Activated naive CD4-positive, alpha-beta T cell treated with anti-CD3 and anti-CD28 coated beads for 36 hours (primary cell): ENCODE measurements at regions of chr22 and their contacts with region 1.

Region 1: GRCh38 chr22:24433813-24434470 is 6.5 kb downstream of the ADORA2A start:
- DNase-seq: peak; percentile 84
- H3K4me3 Mint-ChIP-seq: peak overlapping the region; percentile 58
- H3K27ac Mint-ChIP-seq: peak overlapping the region; percentile 99
- H3K4me1 Mint-ChIP-seq: peaks cover 92% of the 10 kb centered on the region
- H3K27me3 Mint-ChIP-seq: no peaks in the 10 kb centered on the region

Region 2: DNA sequence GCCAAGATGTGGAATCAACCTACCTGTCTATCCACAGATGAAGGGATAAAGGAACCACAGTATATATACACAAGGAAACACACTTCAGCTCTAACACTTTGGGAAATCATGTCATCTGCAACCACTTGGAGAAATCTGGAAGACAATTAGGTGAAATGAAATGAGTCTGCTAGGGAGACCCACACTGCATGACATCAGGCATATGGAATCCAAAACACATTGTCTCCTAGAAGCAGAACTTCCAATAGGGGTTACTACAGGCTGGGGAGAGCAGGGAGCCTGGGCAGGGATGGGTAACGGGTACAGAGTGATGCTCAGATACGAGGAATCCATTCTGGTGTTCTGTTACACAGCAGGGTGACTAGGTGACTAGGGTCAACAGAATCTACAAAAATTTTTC is 724.8 kb before region 1 on chr22:
- CTCF ChIA-PET with region 1: no interaction called
- intact Hi-C with region 1: loop called (anchors 5 kb)
- DNase-seq: no peak
- H3K4me3 Mint-ChIP-seq: no peak overlapping the region
- H3K27ac Mint-ChIP-seq: peak overlapping the region; percentile 79
- H3K4me1 Mint-ChIP-seq: peaks cover 63% of the 10 kb centered on the region
- H3K27me3 Mint-ChIP-seq: no peaks in the 10 kb centered on the region

Region 3: GRCh38 chr22:24270638-24271408 is 163.1 kb before region 1 on chr22 and contains the start of gene SPECC1L:
- CTCF ChIA-PET with region 1: no interaction called
- intact Hi-C with region 1: loop called (anchors 2 kb)
- DNase-seq: peak; percentile 91
- H3K4me3 Mint-ChIP-seq: peak within 1 kb of the TSS; percentile 89
- H3K27ac Mint-ChIP-seq: peak within 1 kb of the TSS; percentile 87
- H3K4me1 Mint-ChIP-seq: peaks cover 36% of the 10 kb centered on the region
- H3K27me3 Mint-ChIP-seq: no peaks in the 10 kb centered on the region
- total RNA-seq, gene SPECC1L: 33.5 to 35.7 TPM

Region 4: GRCh38 chr22:24325105-24325757 is 108.7 kb before region 1 on chr22:
- CTCF ChIA-PET with region 1: no interaction called
- intact Hi-C with region 1: loop called (anchors 1 kb)
- DNase-seq: peak; percentile 31
- H3K4me3 Mint-ChIP-seq: no peak overlapping the region
- H3K27ac Mint-ChIP-seq: peak overlapping the region; percentile 35
- H3K4me1 Mint-ChIP-seq: peaks cover 38% of the 10 kb centered on the region
- H3K27me3 Mint-ChIP-seq: no peaks in the 10 kb centered on the region

Region 5: GRCh38 chr22:24445481-24446259 is 11.7 kb after region 1 on chr22:
- CTCF ChIA-PET with region 1: no interaction called
- intact Hi-C with region 1: loop called (anchors 1 kb)
- DNase-seq: peak; percentile 63
- H3K4me3 Mint-ChIP-seq: no peak overlapping the region
- H3K27ac Mint-ChIP-seq: peak overlapping the region; percentile 37
- H3K4me1 Mint-ChIP-seq: peaks cover 45% of the 10 kb centered on the region
- H3K27me3 Mint-ChIP-seq: no peaks in the 10 kb centered on the region

Region 6: GRCh38 chr22:24503137-24503842 is 69.3 kb after region 1 on chr22:
- CTCF ChIA-PET with region 1: interaction called, 5 read pairs
- intact Hi-C with region 1: loop called (anchors 2 kb)
- DNase-seq: peak; percentile 87
- H3K4me3 Mint-ChIP-seq: no peak overlapping the region
- H3K27ac Mint-ChIP-seq: no peak overlapping the region
- H3K4me1 Mint-ChIP-seq: peaks cover 7% of the 10 kb centered on the region
- H3K27me3 Mint-ChIP-seq: no peaks in the 10 kb centered on the region

Region 7: DNA sequence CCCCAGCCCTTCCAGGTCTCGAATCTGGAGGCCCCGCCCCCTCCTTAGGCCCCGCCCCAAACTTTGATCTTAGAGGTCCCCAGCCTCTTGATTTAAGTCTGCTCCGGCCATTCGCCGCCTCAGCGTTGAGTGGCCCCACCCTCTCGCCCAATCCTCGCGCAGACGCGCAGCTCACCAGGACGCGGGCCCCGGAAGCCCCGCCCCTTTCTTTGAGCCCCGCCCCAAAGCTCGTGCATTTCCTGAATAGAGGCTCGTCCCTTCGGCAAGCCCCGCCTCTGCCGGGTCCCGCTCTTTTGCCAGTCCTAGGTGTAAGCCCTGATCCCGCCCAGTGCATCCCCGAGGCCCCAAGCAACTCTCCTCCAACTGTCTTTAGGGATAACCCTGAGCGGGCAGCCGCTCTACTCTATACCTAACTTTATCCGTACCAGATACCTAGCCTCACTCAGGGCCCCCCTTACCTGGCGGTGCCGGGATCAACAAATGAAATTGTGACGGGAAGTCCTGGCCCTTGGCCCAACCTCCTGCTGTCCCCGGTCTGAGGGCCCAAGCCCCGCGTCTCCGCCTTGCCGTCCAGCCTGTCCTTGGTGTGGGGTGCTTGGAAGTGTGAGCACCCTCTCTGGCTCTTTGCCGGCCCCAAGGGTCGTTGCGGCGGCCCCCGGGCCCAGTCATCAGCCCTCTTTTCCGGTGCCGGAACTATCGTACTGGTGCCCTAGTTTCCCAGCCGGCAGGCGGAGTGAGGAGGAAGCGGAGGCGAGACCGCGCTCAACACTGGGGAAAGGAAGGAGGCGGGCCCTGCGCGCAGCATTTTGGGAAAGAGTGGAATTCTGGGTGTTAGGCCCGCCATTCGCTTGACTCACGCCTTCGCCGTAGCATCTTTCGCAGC is 121.5 kb after region 1 on chr22 and contains the start of gene SNRPD3:
- CTCF ChIA-PET with region 1: no interaction called
- intact Hi-C with region 1: loop called (anchors 1 kb)
- DNase-seq: peak; percentile 100
- H3K4me3 Mint-ChIP-seq: peak within 1 kb of the TSS; percentile 97
- H3K27ac Mint-ChIP-seq: peak within 1 kb of the TSS; percentile 100
- H3K4me1 Mint-ChIP-seq: peaks cover 48% of the 10 kb centered on the region
- H3K27me3 Mint-ChIP-seq: no peaks in the 10 kb centered on the region
- total RNA-seq, gene SNRPD3: 158 to 166 TPM